HepG2 (cell line): ENCODE measurements at regions of chr17 and their contacts with region 1.

Region 1: DNA sequence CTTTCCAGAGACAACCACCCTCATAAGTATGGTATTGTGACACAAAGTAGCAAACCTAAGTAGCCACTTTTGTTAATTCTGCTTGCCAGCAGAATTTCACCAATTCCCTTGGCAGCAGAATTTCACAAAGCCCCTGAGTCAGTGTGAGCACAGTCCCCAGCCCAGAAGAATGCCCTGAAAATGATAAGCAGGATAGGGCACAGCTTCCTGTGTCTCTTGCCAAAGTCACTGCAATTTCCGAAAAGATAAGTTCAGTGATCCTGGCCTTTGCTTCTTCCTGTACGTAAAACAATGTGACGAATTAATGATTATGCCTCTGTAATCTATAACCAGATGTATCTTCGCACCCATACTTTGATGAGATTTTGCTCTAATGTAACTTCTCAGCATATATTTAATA is 16.0 kb upstream of the WIPF2 start:
- DNase-seq: no peak
- ATAC-seq: no peak
- H3K4me3 ChIP-seq: no peak overlapping the region
- H3K27ac ChIP-seq: peak overlapping the region; percentile 0
- H3K4me1 ChIP-seq: peaks cover 78% of the 10 kb centered on the region
- H3K27me3 ChIP-seq: no peaks in the 10 kb centered on the region
- CTCF ChIP-seq: no peak
- EP300 ChIP-seq: no peak
- POLR2A ChIP-seq: no peak
- RAD21 ChIP-seq: no peak

Region 2: DNA sequence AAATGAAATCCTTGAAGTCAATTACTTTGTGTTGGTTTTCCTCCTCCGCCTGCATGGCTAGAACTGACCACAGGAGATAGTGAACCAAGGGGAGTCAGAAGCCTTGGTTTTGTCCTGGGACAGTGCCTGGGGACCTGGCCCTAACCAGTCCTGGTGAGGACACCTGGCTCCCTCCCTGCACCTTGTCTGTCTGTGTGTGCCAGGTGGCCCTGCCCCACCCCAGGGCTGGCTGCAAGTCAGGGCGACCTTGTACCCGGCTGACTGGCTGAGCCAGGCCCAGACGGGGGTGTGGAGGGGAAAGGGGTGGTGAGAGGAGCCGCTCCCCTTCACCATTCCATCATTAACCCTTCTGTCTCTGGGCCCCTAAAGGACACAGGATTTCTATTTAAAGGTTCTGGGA is 22.4 kb before region 1 on chr17:
- CTCF ChIA-PET with region 1: no interaction called
- POLR2A ChIA-PET with region 1: no interaction called
- in situ Hi-C with region 1: no loop called
- intact Hi-C with region 1: no loop called
- DNase-seq: no peak
- ATAC-seq: peak; percentile 16
- H3K4me3 ChIP-seq: no peak overlapping the region
- H3K27ac ChIP-seq: no peak overlapping the region
- H3K4me1 ChIP-seq: peaks cover 21% of the 10 kb centered on the region
- H3K27me3 ChIP-seq: no peaks in the 10 kb centered on the region
- CTCF ChIP-seq: no peak
- EP300 ChIP-seq: no peak
- POLR2A ChIP-seq: no peak
- RAD21 ChIP-seq: no peak

Region 3: GRCh38 chr17:40191237-40192208 is 11.6 kb before region 1 on chr17:
- CTCF ChIA-PET with region 1: interaction called, 4 read pairs
- POLR2A ChIA-PET with region 1: interaction called, 12 read pairs
- in situ Hi-C with region 1: no loop called
- intact Hi-C with region 1: no loop called
- DNase-seq: peak; percentile 71
- ATAC-seq: peak; percentile 76
- H3K4me3 ChIP-seq: peak overlapping the region; percentile 61 to 80 (median 79)
- H3K27ac ChIP-seq: peak overlapping the region; percentile 53
- H3K4me1 ChIP-seq: peaks cover 37% of the 10 kb centered on the region
- H3K27me3 ChIP-seq: no peaks in the 10 kb centered on the region
- CTCF ChIP-seq: peak; percentile 96
- EP300 ChIP-seq: no peak
- POLR2A ChIP-seq: no peak
- RAD21 ChIP-seq: peak; percentile 50

Region 4: GRCh38 chr17:40219073-40219860 is 16.1 kb after region 1 on chr17 and contains the start of gene WIPF2:
- CTCF ChIA-PET with region 1: no interaction called
- POLR2A ChIA-PET with region 1: interaction called, 19 read pairs
- in situ Hi-C with region 1: no loop called
- intact Hi-C with region 1: no loop called
- DNase-seq: peak; percentile 97
- ATAC-seq: peak; percentile 94
- H3K4me3 ChIP-seq: peak within 1 kb of the TSS; percentile 87 to 100 (median 93)
- H3K27ac ChIP-seq: peak within 1 kb of the TSS; percentile 90
- H3K4me1 ChIP-seq: peaks cover 19% of the 10 kb centered on the region
- H3K27me3 ChIP-seq: no peaks in the 10 kb centered on the region; a peak in 1 of 5 replicates
- CTCF ChIP-seq: peak; percentile 81
- EP300 ChIP-seq: 0 out of 4 replicates have a peak, but pooled peaks of 1 of the 2 experiments have one; percentile 12
- POLR2A ChIP-seq: peak; percentile 72 to 77
- RAD21 ChIP-seq: no peak
- total RNA-seq, gene WIPF2: 10.8 and 11.8 TPM in 2 replicates

Region 5: DNA sequence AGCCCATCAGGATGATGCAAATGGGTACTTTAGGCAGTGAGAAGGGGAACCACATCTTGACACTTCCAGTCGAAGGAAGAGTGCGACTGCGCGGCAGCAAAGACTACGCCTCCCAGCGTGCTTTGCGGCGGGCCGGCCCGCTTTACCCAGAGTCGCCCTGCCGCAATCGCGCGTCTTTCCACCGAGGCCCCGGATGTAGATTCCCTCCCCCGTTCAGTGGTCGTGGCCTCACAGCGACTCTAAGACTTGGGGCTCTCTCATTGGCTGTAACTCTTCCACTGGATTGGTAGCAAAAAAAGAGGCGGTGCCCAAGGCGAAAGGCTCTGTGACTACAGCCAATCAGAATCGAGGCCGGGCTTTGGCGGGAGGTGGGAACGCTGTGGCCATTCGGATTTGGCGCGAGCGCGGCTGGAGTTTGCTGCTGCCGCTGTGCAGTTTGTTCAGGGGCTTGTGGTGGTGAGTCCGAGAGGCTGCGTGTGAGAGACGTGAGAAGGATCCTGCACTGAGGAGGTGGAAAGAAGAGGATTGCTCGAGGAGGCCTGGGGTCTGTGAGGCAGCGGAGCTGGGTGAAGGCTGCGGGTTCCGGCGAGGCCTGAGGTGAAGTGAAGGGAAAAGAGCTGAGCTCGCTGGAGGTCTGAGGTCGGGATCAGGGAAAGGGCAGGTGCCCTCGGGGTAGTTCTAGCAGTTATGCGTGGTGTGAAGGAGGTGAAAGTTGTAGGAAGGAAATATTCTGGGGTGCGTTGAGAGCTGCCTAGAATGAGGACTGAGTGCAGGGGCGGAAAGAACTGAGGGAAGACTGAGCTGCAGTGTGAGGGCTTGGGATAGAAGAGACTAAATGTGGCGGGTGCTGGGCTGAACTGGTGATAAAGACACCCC is 84.6 kb after region 1 on chr17 and contains the start of gene CDC6:
- CTCF ChIA-PET with region 1: interaction called, 38 read pairs
- POLR2A ChIA-PET with region 1: interaction called, 4 read pairs
- in situ Hi-C with region 1: loop called (anchors 5 kb)
- intact Hi-C with region 1: loop called (anchors 1 kb)
- DNase-seq: peak; percentile 100
- ATAC-seq: peak; percentile 95
- H3K4me3 ChIP-seq: peak within 1 kb of the TSS; percentile 81 to 99 (median 92)
- H3K27ac ChIP-seq: peak within 1 kb of the TSS; percentile 92
- H3K4me1 ChIP-seq: peaks cover 72% of the 10 kb centered on the region
- H3K27me3 ChIP-seq: no peaks in the 10 kb centered on the region
- CTCF ChIP-seq: peak; percentile 5; the same call in 1 of the 2 replicates
- EP300 ChIP-seq: peak; percentile 5 to 16; a peak in 1 of 4 replicates
- POLR2A ChIP-seq: peak; percentile 89 to 98
- RAD21 ChIP-seq: no peak
- total RNA-seq, gene CDC6: 114 and 154 TPM in 2 replicates